HepG2 (cell line): ENCODE measurements at regions of chr12 and their contacts with region 1.

Region 1: DNA sequence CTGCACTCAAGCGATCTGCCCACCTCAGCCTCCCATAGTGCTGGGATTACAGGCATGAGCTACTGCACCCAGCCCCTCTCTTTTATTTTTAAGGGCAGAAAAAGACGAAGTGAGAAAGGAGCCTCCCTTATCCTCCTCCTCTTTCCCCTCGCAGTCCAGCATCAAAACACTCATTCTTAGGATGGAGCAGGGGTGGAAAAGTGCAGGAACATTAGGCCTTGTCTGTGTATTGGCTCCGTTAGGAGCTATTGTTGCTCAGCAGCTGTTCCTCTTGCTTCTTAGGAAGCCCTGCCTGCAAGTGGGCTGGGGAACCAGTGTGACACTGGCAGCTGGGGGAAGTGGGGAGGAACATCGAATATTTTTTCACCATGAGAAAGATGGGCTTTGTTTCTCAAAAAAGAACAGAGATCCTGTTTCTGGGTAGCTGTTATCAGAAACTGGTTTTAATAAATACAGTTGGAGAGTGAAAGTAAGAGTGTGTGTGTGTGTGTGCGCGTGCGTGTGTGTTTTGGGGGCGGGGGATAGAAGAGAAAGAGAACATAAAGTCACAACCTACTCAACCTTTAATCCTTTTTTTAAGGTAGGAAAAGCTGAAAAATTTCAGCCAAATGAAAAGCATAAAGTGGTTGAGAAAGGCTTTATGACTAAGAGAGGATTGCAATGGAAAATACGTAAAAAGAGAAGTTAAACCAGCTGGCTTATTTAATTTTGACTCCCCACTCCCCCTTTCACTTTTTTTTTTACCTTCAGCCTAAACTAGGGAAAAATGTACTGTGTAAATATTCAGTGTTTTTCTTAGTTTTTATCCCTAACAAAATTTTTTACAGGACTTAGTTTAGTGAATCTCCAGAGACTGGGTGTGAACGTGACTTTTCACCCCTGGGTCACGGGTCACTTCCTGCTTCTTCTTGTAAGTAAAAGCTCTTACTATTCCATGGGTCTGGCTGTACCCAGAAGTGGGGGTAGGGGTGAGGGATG is 197.2 kb upstream of the PLEKHG7 start:
- DNase-seq: no peak
- ATAC-seq: peak; percentile 24; the same call in 1 of the 3 replicates
- H3K4me3 ChIP-seq: peak overlapping the region; percentile 37 to 67 (median 55)
- H3K27ac ChIP-seq: peak overlapping the region; percentile 58
- H3K4me1 ChIP-seq: peaks cover 53% of the 10 kb centered on the region
- H3K27me3 ChIP-seq: peaks cover 0 to 4% of the 10 kb centered on the region in 2 experiments; a peak in 1 of 5 replicates
- CTCF ChIP-seq: no peak
- EP300 ChIP-seq: no peak
- POLR2A ChIP-seq: no peak
- RAD21 ChIP-seq: no peak

Region 2: DNA sequence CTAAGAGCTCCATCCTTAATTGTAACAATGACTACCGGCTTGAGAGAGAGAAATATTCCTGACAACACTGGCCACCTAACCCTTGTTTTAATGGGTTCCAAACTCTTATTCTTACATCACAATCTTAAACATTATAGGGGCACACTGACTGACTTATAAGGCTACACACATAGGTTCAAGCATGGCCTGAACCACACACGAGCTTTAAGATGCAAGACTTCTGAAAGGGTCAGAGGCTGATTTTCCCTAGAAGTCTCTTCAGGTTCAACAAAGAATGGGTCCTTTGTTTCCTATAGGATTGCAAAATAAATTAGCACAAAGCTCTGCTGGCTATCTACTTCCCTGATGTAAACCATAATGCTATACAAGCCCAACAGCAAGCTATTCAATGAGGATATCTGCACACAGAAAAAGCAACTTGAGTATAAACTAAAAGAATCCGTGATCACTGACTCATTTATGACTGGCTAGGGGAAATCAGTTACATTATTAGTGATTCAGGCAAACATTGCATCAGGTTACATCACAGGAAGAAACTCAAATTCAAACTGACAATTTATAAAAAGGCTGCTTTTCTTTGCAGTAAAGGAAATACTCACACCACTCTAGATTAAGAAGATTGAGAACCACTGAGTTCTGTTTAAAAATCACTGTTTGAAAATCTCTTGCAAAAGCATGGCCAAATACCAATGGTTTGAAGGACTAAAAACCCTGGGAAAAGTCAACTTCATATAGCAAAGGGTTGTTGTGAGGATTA is 368.4 kb before region 1 on chr12:
- CTCF ChIA-PET with region 1: no interaction called
- POLR2A ChIA-PET with region 1: no interaction called
- in situ Hi-C with region 1: no loop called
- intact Hi-C with region 1: loop called (anchors 5 kb)
- DNase-seq: peak; percentile 65
- ATAC-seq: peak; percentile 86
- H3K4me3 ChIP-seq: peak overlapping the region in 1 of 3 experiments; percentile 14; a peak in 1 of 6 replicates
- H3K27ac ChIP-seq: peak overlapping the region; percentile 42
- H3K4me1 ChIP-seq: peaks cover 63% of the 10 kb centered on the region
- H3K27me3 ChIP-seq: no peaks in the 10 kb centered on the region
- CTCF ChIP-seq: no peak
- EP300 ChIP-seq: 0 out of 4 replicates have a peak, but pooled peaks of 1 of the 2 experiments have one; percentile 12
- POLR2A ChIP-seq: no peak
- RAD21 ChIP-seq: no peak

Region 3: GRCh38 chr12:92543359-92543758 is 37.8 kb after region 1 on chr12:
- CTCF ChIA-PET with region 1: no interaction called
- POLR2A ChIA-PET with region 1: interaction called, 17 read pairs
- in situ Hi-C with region 1: no loop called
- intact Hi-C with region 1: no loop called
- DNase-seq: peak; percentile 8
- ATAC-seq: peak; percentile 59; the same call in 2 of the 3 replicates
- H3K4me3 ChIP-seq: no peak overlapping the region
- H3K27ac ChIP-seq: no peak overlapping the region
- H3K4me1 ChIP-seq: peaks cover 32% of the 10 kb centered on the region
- H3K27me3 ChIP-seq: no peaks in the 10 kb centered on the region
- CTCF ChIP-seq: no peak
- EP300 ChIP-seq: no peak
- POLR2A ChIP-seq: no peak
- RAD21 ChIP-seq: no peak